AG04450 (cell line): ENCODE measurements at regions of chr20 and their contacts with region 1.

Region 1: DNA sequence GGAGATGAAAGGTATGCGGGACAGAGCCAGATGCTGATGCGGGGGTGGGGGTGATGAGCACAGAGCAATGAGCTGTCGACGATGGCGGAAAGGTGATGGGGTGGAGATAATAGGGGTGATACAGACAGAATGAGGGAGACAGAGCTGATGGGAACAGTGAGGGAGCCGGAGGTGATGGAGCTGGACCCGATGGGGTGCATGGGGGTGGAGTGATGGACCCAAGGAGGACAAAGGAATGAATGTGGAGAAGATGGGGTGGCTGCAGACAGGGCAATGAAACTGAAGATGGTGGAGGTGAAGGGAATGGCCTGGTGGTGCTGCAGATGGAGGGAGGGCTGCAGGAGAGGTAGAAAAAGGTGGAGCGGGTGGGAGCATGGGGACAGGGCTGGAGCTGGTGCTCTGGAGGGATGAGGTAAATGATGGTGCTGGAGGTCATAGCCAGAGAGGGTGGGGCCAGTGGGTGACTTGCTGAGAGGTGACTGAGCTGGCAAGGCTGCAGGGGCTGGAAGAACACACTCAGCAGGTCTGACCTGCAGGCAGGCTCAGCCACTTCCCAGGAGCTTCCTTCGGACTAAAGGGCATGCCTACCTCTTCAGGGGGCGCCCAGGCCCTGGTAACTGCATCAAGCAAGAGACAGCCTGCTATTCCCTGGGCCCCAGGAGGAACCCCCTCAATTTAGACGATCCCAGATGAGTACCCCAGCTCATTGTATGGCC is 6.0 kb upstream of the FOXS1 start:
- DNase-seq: no peak
- H3K4me3 ChIP-seq: no peak overlapping the region
- H3K27ac ChIP-seq: no peak overlapping the region
- H3K27me3 ChIP-seq: peaks cover 57% of the 10 kb centered on the region
- CTCF ChIP-seq: no peak

Region 2: GRCh38 chr20:31630187-31630790 is 221.1 kb before region 1 on chr20:
- CTCF ChIA-PET with region 1: no interaction called
- POLR2A ChIA-PET with region 1: no interaction called
- DNase-seq: no peak
- H3K4me3 ChIP-seq: no peak overlapping the region
- H3K27ac ChIP-seq: no peak overlapping the region
- H3K27me3 ChIP-seq: no peaks in the 10 kb centered on the region
- CTCF ChIP-seq: no peak

Region 3: DNA sequence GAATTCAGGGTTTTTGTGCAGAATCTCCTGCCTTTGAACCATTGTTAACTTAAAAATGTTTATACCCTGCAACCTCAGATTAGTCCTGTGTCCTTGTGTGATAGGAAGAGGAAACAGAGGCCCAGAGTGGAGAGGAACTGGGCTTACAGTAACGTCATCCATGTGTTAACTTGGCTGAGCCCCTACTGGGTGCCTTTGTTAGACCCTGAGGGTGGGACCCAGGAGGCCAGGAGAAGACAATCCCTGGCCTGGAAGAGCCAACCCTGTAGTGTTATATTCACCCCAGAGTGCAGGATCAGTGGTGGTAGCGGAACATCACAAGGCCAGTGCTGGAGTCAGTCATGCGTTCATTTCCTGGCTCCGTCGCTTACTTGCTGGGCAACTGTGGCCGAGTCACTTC is 21.7 kb before region 1 on chr20:
- CTCF ChIA-PET with region 1: interaction called, 20 read pairs
- POLR2A ChIA-PET with region 1: no interaction called
- DNase-seq: no peak
- H3K4me3 ChIP-seq: no peak overlapping the region
- H3K27ac ChIP-seq: no peak overlapping the region
- H3K27me3 ChIP-seq: peaks cover 6% of the 10 kb centered on the region
- CTCF ChIP-seq: no peak

Region 4: GRCh38 chr20:31835977-31836852 is 15.2 kb before region 1 on chr20:
- CTCF ChIA-PET with region 1: interaction called, 25 read pairs
- POLR2A ChIA-PET with region 1: no interaction called
- DNase-seq: peak; percentile 74
- H3K4me3 ChIP-seq: no peak overlapping the region
- H3K27ac ChIP-seq: peak overlapping the region; percentile 11
- H3K27me3 ChIP-seq: peaks cover 2% of the 10 kb centered on the region
- CTCF ChIP-seq: no peak

Region 5: GRCh38 chr20:31861346-31862156 is 10.2 kb after region 1 on chr20:
- CTCF ChIA-PET with region 1: interaction called, 30 read pairs
- POLR2A ChIA-PET with region 1: no interaction called
- DNase-seq: no peak
- H3K4me3 ChIP-seq: peak overlapping the region; percentile 48
- H3K27ac ChIP-seq: no peak overlapping the region
- H3K27me3 ChIP-seq: peaks cover 63% of the 10 kb centered on the region
- CTCF ChIP-seq: no peak

Region 6: GRCh38 chr20:31870726-31871617 is 19.6 kb after region 1 on chr20:
- CTCF ChIA-PET with region 1: interaction called, 14 read pairs
- POLR2A ChIA-PET with region 1: no interaction called
- DNase-seq: no peak
- H3K4me3 ChIP-seq: no peak overlapping the region; the same call in 1 of the 2 replicates
- H3K27ac ChIP-seq: no peak overlapping the region
- H3K27me3 ChIP-seq: peaks cover 58% of the 10 kb centered on the region
- CTCF ChIP-seq: no peak

Region 7: DNA sequence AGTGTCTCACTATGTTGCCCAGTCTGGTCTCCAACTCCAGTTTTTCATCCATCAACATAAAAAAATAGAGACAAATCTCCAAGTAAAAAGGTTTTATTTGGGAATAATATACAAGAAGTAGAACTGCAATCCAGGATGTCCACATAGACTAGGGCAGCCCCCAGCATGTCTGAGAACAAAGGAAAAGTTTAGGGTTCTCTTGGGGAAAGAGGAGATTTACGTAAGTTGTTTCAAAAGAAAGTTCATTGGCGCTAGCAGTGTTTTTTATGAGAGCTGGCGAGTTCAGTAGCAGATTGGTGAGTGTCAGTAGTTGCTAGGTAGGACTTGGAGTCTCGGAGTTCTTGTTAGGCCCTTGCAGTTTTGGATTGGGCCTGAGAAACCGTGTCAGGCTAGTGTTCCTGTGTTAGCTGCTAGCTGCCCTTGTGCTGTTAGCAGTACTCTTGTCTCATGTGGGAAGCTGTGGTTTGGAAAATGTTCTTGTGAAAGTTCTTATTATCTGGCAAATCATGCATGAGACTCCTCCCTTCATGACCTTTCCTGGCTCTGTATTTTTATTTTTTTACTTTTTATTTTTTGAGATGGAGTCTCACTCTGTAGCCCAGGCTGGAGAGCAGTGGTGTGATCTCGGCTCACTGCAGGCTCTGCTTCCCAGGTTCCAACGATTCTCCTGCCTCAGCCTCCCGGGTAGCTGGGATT is 43.7 kb after region 1 on chr20:
- CTCF ChIA-PET with region 1: interaction called, 12 read pairs
- POLR2A ChIA-PET with region 1: no interaction called
- DNase-seq: no peak
- H3K4me3 ChIP-seq: no peak overlapping the region
- H3K27ac ChIP-seq: no peak overlapping the region
- H3K27me3 ChIP-seq: peaks cover 16% of the 10 kb centered on the region
- CTCF ChIP-seq: no peak

Region 8: GRCh38 chr20:31968291-31969126 is 117.1 kb after region 1 on chr20:
- CTCF ChIA-PET with region 1: interaction called, 11 read pairs
- POLR2A ChIA-PET with region 1: no interaction called
- DNase-seq: peak; percentile 23
- H3K4me3 ChIP-seq: no peak overlapping the region
- H3K27ac ChIP-seq: no peak overlapping the region
- H3K27me3 ChIP-seq: peaks cover 28% of the 10 kb centered on the region
- CTCF ChIP-seq: no peak